Endothelial cell of umbilical vein (primary cell): ENCODE measurements at regions of chrX and their contacts with region 1.

Region 1: GRCh38 chrX:106894392-106894909 is 8.7 kb downstream of the RIPPLY1 start:
- DNase-seq: peak; percentile 57
- H3K4me3 ChIP-seq: no peak overlapping the region
- H3K27ac ChIP-seq: peak overlapping the region; percentile 35
- H3K4me1 ChIP-seq: peaks cover 16% of the 10 kb centered on the region
- H3K27me3 ChIP-seq: no peaks in the 10 kb centered on the region
- CTCF ChIP-seq: peak; percentile 73 to 74
- POLR2A ChIP-seq: no peak

Region 2: DNA sequence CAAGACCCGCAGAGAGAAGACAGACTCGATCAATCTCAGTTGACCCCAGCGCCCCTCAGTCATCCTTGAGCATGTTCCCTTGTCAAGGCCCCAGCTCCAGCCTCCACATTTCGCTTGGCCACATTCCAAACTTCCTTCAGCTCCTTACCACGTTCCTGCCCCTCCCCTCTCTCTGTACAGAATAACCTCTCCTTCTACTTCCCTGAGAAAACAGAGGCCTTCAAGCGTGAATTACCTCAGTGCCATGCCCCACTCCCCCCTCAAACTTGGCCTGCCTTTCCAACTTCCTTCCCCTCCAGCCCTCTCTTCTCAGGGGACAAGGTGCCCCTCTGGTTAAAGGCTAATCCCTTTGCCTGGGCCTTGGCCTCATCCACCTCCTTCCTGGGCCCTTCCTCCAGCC is 11.9 kb after region 1 on chrX:
- CTCF ChIA-PET with region 1: interaction called, 12 read pairs
- POLR2A ChIA-PET with region 1: interaction called, 7 read pairs
- dilution Hi-C with region 1: no loop called
- intact Hi-C with region 1: no loop called
- DNase-seq: peak; percentile 11
- H3K4me3 ChIP-seq: no peak overlapping the region
- H3K27ac ChIP-seq: no peak overlapping the region
- H3K4me1 ChIP-seq: no peaks in the 10 kb centered on the region
- H3K27me3 ChIP-seq: no peaks in the 10 kb centered on the region
- CTCF ChIP-seq: no peak
- POLR2A ChIP-seq: no peak

Region 3: DNA sequence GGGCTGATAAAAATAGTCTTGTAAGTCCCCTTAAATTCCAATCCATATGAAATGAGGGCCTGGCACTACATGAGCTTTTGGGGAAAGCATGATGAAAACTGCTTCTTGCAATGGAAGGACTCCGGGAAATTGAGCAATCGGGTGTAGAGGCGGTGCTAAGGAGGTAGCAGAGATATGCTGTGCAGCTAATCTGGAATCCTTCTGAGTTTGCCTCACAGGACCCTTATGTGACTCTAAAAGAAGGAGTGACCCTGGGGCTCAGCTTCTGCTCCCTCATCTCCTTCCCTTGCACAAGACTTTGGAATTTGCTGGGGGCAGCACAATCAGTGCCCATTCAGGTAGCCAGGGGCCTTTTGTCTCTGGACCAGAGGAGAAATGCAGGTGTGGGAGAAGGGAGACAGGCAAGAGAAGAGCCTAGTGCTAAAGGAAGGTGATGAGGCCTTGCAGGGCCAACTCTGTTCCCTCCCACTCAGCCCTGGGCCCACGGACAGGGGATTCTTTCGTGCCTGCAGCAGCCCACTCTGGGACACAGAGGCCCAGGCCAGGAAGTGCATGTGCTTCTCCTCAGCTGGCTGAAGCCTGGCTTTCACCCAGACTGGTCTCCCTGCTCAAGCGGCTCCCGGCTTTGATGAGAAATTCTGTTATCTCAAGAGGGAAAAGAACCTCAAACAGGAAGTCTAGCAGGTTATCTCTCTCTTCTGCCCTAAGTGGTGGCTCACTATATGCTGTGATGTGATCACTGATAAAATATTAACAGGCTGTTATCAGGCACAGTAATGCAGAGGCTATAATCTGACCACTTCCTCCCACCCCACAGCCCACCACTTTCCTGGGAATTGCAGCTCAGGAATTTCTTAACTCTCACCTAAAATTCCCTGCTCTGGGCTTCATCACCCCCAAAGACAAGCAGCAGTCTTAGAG is 38.9 kb after region 1 on chrX:
- CTCF ChIA-PET with region 1: interaction called, 17 read pairs
- POLR2A ChIA-PET with region 1: no interaction called
- dilution Hi-C with region 1: no loop called
- intact Hi-C with region 1: loop called (anchors 5 kb)
- DNase-seq: peak; percentile 27
- H3K4me3 ChIP-seq: no peak overlapping the region
- H3K27ac ChIP-seq: no peak overlapping the region
- H3K4me1 ChIP-seq: peaks cover 21% of the 10 kb centered on the region
- H3K27me3 ChIP-seq: no peaks in the 10 kb centered on the region
- CTCF ChIP-seq: no peak
- POLR2A ChIP-seq: no peak

Region 4: DNA sequence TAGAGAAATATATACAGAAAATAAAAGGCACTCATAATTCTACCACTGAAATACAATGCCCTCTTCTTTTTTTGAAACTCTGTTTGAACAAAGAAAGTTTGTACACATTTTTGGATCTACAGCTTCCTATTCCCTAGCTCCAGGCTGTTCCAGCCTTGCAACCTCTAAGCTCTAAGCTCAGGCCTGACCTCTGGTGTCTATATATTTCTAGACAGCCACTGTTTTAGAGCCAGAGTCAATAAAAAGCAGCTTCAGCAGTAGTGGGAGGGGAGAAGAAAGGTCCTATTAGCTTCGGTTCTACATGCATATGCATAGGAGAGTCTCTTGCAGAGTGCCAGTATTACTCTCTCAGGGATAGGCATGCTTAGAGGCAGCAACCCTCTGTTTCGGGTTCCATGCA is 65.5 kb after region 1 on chrX:
- CTCF ChIA-PET with region 1: interaction called, 121 read pairs
- POLR2A ChIA-PET with region 1: no interaction called
- dilution Hi-C with region 1: no loop called
- intact Hi-C with region 1: no loop called
- DNase-seq: peak; percentile 30
- H3K4me3 ChIP-seq: no peak overlapping the region
- H3K27ac ChIP-seq: no peak overlapping the region
- H3K4me1 ChIP-seq: no peaks in the 10 kb centered on the region
- H3K27me3 ChIP-seq: no peaks in the 10 kb centered on the region
- CTCF ChIP-seq: peak in 1 of 2 donors; percentile 12
- POLR2A ChIP-seq: no peak

Region 5: GRCh38 chrX:107324499-107325320 is 430.3 kb after region 1 on chrX:
- CTCF ChIA-PET with region 1: interaction called, 11 read pairs
- POLR2A ChIA-PET with region 1: no interaction called
- dilution Hi-C with region 1: no loop called
- intact Hi-C with region 1: loop called (anchors 10 kb)
- DNase-seq: peak; percentile 2
- H3K4me3 ChIP-seq: no peak overlapping the region
- H3K27ac ChIP-seq: no peak overlapping the region
- H3K4me1 ChIP-seq: no peaks in the 10 kb centered on the region
- H3K27me3 ChIP-seq: no peaks in the 10 kb centered on the region
- CTCF ChIP-seq: no peak
- POLR2A ChIP-seq: no peak